Activated CD8-positive, alpha-beta T cell treated with anti-CD3 and anti-CD28 coated beads for 36 hours (primary cell): ENCODE measurements at regions of chr2 and their contacts with region 1.

Region 1: DNA sequence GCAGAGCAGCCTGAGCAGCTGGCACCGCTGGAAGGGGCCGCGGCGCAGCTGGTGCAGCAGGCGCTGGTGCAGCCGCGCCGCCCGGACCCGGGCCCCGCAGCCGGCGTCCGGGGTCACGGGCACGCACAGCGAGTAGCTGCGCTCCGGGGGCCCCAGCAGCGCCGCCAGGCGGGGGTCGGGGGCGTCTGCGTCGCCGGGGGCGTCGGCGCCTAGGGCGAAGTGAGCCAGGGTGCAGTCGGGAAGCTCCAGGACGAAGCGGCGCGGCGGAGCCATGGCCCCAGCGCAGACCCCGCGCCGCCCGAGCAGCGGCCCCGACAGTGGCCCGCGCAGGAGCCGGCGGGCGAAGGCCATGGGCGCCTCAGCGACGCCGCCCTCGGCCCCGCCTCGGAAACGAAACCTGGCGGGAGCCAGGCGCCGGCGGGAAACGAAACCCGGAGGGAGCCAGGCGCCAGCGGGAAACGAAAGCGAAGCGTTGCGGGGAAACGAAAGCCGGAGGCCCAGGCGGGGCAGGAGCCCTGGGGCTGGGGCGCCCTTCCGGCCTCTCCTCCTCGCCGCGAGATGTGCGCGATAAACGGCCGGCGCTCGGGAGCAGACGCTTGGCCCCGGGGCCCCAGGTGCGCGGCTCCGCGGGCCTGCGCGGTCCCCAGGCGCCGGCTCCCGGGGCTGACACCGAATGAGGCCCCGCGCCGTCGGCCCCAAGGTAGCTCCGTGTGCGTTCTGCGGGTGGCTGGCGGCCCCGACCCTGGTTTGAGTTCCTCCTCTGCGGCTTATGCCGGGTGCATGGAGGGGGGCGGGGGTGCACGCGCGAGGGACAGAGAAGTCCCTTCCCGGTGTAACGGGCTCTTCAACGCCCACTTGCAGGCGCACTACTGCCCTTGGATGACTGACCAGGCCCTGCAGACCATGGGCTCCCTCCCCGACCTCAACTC is at the start of gene CMPK2:
- DNase-seq: peak; percentile 80
- ATAC-seq: peak; percentile 82
- H3K4me3 Mint-ChIP-seq: peak within 1 kb of the TSS; percentile 75
- H3K27ac Mint-ChIP-seq: peak within 1 kb of the TSS; percentile 84
- H3K4me1 Mint-ChIP-seq: peaks cover 13% of the 10 kb centered on the region
- H3K27me3 Mint-ChIP-seq: no peaks in the 10 kb centered on the region
- CTCF ChIP-seq: no peak
- total RNA-seq, gene CMPK2: 3.2 to 4.5 TPM

Region 2: DNA sequence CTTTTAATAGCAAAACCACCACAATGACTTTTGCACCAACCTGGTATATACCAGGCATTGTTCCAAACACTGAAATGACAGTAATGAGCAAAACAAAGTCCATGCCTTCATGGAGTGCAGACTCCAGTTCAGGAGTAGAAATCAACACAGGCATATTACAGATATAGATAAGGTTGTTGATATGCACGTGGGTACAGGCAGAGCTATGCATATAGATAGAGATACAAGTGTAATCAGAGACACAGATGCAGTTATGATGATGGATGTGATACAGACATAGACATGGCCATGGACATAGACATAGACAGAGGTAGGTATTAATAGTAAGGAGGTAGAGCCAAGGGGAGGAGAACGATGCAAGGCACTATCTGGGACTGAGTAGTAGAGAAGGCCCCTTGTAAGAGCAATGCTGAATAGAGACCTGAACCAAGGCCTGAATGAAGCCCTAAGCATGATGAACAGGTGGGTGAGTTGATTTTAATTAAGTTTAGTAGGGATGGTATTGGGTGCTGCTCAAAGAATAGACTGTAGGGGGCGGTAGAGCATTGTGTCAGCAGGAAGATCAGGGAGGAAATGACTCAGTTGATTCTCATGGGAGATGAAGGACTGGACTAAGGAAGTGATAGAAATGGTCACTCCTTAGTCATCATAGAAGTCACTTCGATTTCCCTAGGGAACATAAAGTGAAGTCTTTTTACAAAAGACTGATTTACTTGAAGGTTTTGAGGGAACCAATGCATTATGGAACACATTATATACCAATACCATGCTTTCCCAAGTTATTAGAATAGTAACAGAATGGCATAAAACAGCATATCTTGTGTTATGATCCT is 39.3 kb before region 1 on chr2:
- CTCF ChIA-PET with region 1: interaction called, 16 read pairs
- POLR2A ChIA-PET with region 1: interaction called, 3 read pairs
- intact Hi-C with region 1: no loop called
- DNase-seq: peak; percentile 82
- ATAC-seq: peak; percentile 96
- H3K4me3 Mint-ChIP-seq: no peak overlapping the region
- H3K27ac Mint-ChIP-seq: no peak overlapping the region
- H3K4me1 Mint-ChIP-seq: peaks cover 9% of the 10 kb centered on the region
- H3K27me3 Mint-ChIP-seq: no peaks in the 10 kb centered on the region
- CTCF ChIP-seq: peak; percentile 85

Region 3: GRCh38 chr2:6877402-6878304 is 12.0 kb after region 1 on chr2 and contains the start of gene RSAD2:
- CTCF ChIA-PET with region 1: interaction called, 69 read pairs
- POLR2A ChIA-PET with region 1: interaction called, 48 read pairs
- intact Hi-C with region 1: no loop called
- DNase-seq: peak; percentile 40
- ATAC-seq: peak; percentile 80
- H3K4me3 Mint-ChIP-seq: peak within 1 kb of the TSS; percentile 66
- H3K27ac Mint-ChIP-seq: peak within 1 kb of the TSS; percentile 40
- H3K4me1 Mint-ChIP-seq: peaks cover 68% of the 10 kb centered on the region
- H3K27me3 Mint-ChIP-seq: no peaks in the 10 kb centered on the region
- CTCF ChIP-seq: no peak
- total RNA-seq, gene RSAD2: 2.8 to 3.7 TPM

Region 4: DNA sequence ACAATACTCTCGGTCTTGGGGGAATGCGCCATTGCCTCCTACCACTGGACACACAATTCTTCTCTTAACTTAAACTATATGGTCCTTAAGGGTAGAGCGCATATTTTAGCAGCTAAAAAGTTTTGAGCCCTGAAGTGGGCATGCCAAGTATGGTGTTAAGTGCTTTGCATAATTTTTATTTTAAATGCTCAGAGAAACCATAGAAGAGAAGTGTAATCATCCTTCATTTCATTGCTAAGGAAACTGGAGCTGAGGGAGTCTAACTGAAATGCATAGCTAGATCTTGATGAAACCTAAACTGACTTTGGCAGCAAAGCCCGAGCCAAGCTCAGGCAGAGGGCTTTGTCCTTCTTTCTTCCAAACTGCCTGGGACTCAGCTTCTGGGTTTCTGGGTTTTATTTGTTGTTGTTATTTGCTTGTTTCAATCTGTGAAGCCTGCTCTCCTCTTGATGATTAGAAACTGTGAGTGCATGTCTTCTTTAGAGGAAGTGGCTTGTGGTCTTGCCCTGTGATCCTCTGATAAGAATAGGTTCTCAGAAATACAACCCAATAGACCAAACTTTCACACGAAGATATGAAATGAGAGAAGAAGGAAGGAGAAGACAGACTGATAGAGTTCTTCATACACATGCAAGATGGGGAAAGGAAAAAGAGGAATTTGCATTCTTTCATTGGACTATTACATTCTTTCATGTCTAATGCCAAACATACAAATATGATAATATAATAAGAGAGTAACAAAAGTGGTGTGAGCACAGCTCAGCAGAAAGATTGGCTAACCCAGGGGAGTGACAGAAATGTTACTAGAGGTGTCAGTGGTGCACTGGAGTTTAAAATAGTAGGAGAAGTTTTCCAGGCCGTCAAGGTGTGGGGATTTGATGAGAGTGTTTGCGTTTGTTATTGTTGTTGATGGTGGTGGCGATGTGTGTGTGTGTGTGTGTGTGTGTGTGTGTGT is 44.1 kb after region 1 on chr2:
- CTCF ChIA-PET with region 1: interaction called, 8 read pairs
- POLR2A ChIA-PET with region 1: interaction called, 9 read pairs
- intact Hi-C with region 1: loop called (anchors 5 kb)
- DNase-seq: peak; percentile 78
- ATAC-seq: peak; percentile 49
- H3K4me3 Mint-ChIP-seq: peak overlapping the region; percentile 48
- H3K27ac Mint-ChIP-seq: peak overlapping the region; percentile 97
- H3K4me1 Mint-ChIP-seq: peaks cover 88% of the 10 kb centered on the region
- H3K27me3 Mint-ChIP-seq: no peaks in the 10 kb centered on the region
- CTCF ChIP-seq: no peak

Region 5: DNA sequence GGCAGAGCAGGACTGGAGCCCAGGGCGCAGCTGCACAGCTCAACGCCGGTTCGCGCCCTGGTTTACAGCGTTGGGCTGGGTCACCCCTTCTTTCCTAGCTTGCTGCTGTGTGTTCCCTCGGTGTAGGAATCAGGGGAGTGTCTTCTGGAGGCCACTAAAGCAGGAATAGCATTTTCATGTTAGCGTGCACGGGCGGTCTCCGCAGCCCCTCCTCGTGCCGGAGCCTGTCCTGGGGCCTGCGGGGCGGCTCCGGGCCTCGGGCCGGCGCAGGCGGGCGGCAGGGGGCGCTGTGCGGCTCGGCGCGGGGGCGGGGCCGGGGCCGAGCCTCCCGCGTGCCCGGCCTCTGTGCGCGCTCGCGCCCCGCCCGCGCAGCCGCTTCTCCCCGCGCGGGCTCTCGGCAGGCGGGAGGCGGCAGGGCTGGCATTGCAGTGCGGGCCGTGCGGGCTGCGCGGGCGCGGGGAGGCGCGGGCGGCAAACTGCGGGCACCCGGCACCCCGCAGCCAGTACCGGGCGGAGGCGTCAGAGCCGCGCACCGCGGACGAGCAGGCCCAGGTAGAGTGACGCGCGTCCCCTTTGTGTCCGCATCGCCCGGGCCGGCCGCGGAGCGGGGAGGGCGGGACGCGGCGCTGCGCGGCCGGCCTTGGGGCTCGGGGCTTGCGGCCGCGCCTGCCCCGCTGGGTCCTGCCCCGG is 51.6 kb after region 1 on chr2 and contains the start of gene RNF144A:
- CTCF ChIA-PET with region 1: interaction called, 22 read pairs
- POLR2A ChIA-PET with region 1: interaction called, 6 read pairs
- intact Hi-C with region 1: no loop called
- DNase-seq: peak; percentile 67
- ATAC-seq: peak; percentile 68
- H3K4me3 Mint-ChIP-seq: peak within 1 kb of the TSS; percentile 74
- H3K27ac Mint-ChIP-seq: peak within 1 kb of the TSS; percentile 86
- H3K4me1 Mint-ChIP-seq: peaks cover 66% of the 10 kb centered on the region
- H3K27me3 Mint-ChIP-seq: no peaks in the 10 kb centered on the region
- CTCF ChIP-seq: peak; percentile 53
- total RNA-seq, gene RNF144A: 32.6 to 36.5 TPM